Activated naive CD4-positive, alpha-beta T cell treated with anti-CD3 and anti-CD28 coated beads for 36 hours (primary cell): ENCODE measurements at regions of chr17 and their contacts with region 1.

Region 1: GRCh38 chr17:66331038-66331816 is 28.8 kb downstream of the PRKCA start:
- DNase-seq: peak; percentile 49
- H3K4me3 Mint-ChIP-seq: peak overlapping the region; percentile 73
- H3K27ac Mint-ChIP-seq: peak overlapping the region; percentile 94
- H3K4me1 Mint-ChIP-seq: peaks cover 76% of the 10 kb centered on the region
- H3K27me3 Mint-ChIP-seq: no peaks in the 10 kb centered on the region

Region 2: GRCh38 chr17:66115246-66115645 is 216.0 kb before region 1 on chr17:
- CTCF ChIA-PET with region 1: no interaction called
- intact Hi-C with region 1: no loop called
- DNase-seq: no peak
- H3K4me3 Mint-ChIP-seq: no peak overlapping the region
- H3K27ac Mint-ChIP-seq: no peak overlapping the region
- H3K4me1 Mint-ChIP-seq: no peaks in the 10 kb centered on the region
- H3K27me3 Mint-ChIP-seq: no peaks in the 10 kb centered on the region

Region 3: GRCh38 chr17:66317629-66318028 is 13.6 kb before region 1 on chr17:
- CTCF ChIA-PET with region 1: interaction called, 48 read pairs
- intact Hi-C with region 1: loop called (anchors 1 kb)
- DNase-seq: no peak
- H3K4me3 Mint-ChIP-seq: no peak overlapping the region
- H3K27ac Mint-ChIP-seq: peak overlapping the region; percentile 70
- H3K4me1 Mint-ChIP-seq: peaks cover 62% of the 10 kb centered on the region
- H3K27me3 Mint-ChIP-seq: no peaks in the 10 kb centered on the region

Region 4: DNA sequence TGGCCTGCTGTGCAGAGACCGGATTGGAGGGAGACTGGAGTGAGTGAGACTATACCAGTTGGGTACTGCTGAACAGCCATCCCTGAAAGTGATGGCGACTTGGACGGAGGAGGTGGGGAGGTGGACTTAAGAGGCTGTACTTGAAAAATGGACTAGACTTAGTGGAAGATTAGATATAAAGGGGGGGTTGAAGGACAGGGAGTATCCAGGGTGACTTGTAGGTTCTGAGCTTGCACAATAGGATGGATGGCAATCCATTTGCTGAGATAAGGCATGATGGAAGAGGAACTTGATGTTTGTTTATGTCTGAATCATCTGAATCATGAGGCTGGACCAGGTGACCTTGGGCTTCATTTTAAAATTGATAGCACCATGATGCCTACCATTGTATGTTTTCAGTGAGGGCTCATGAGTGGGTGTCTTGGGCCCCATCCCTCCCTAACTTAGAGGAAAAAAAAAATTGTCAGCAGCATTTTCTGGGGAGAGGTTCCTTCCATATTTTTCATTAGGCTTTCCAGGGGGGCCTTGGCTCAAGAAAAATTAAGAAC is 12.4 kb after region 1 on chr17:
- CTCF ChIA-PET with region 1: interaction called, 4 read pairs
- intact Hi-C with region 1: loop called (anchors 1 kb)
- DNase-seq: no peak
- H3K4me3 Mint-ChIP-seq: no peak overlapping the region
- H3K27ac Mint-ChIP-seq: no peak overlapping the region
- H3K4me1 Mint-ChIP-seq: peaks cover 69% of the 10 kb centered on the region
- H3K27me3 Mint-ChIP-seq: no peaks in the 10 kb centered on the region

Region 5: DNA sequence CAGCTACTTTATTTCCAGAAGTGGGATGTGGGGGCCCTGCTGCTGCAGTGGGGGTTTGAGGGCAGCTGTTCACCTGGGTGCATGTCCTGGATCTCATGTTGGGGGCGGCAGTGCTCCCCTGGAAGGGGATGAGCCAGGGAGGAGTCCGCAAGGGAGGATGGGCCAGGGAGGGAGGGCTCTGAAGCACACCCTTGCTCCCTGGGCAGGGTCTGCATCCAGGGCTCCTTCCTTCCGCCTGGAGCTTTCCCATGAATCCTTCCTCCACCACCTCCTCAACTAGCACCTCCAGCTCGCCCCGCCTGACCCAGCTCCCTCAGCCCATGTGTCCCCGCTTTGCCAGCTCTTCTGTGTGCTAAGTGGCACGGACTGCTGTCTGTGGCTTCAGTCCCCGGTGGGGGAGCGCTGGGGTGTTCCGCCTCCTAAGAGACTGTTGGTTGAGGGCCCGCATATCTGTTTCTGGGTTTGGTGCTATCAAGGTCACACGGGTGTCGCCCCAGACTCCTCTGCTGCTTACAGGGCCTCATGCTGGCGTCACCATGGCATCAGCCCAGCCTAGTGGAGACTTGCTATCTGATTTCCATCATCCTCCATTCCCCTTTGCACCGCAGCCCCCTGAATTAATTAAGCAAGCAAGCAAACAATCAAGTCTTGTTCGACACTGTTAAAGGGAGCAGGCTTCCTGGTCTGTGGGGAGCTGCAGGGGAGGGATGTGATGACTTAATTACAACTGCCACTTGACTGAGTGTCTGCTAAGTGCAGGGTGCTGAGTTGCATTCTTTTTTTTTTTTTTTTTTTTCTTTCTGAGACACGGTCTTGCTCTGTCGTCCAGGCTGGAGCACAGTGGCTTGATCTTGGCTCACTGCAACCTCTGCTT is 43.0 kb after region 1 on chr17:
- CTCF ChIA-PET with region 1: no interaction called
- intact Hi-C with region 1: no loop called
- DNase-seq: peak; percentile 47
- H3K4me3 Mint-ChIP-seq: peak overlapping the region; percentile 4
- H3K27ac Mint-ChIP-seq: peak overlapping the region; percentile 39
- H3K4me1 Mint-ChIP-seq: peaks cover 73% of the 10 kb centered on the region
- H3K27me3 Mint-ChIP-seq: no peaks in the 10 kb centered on the region